Activated CD4-positive, alpha-beta memory T cell treated with anti-CD3 and anti-CD28 coated beads for 36 hours (primary cell): ENCODE measurements at regions of chr6 and their contacts with region 1.

Region 1: GRCh38 chr6:158649289-158650143 is at the start of gene SYTL3:
- DNase-seq: peak; percentile 93
- H3K4me3 Mint-ChIP-seq: peak within 1 kb of the TSS; percentile 79
- H3K27ac Mint-ChIP-seq: peak within 1 kb of the TSS; percentile 99
- H3K4me1 Mint-ChIP-seq: peaks cover 77% of the 10 kb centered on the region
- H3K27me3 Mint-ChIP-seq: no peaks in the 10 kb centered on the region
- total RNA-seq, gene SYTL3: 181 to 186 TPM

Region 2: DNA sequence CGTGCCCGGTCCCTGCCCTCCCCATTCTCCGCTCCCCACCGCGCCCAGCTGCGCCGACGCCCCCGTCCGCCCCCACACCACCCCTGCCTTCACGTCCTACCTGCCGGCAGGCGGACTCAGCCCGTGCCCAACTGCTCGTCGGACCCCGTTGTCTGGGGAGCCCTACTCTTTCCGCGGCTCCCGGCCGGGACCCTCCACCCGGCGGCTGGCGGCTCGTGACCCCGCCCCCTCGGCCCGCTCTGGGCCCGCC is 481.6 kb before region 1 on chr6 and contains the start of gene SERAC1:
- CTCF ChIA-PET with region 1: no interaction called
- POLR2A ChIA-PET with region 1: no interaction called
- intact Hi-C with region 1: loop called (anchors 2 kb)
- DNase-seq: no peak
- H3K4me3 Mint-ChIP-seq: peak within 1 kb of the TSS; percentile 91
- H3K27ac Mint-ChIP-seq: peak within 1 kb of the TSS; percentile 95
- H3K4me1 Mint-ChIP-seq: peaks cover 33% of the 10 kb centered on the region
- H3K27me3 Mint-ChIP-seq: no peaks in the 10 kb centered on the region
- total RNA-seq, gene SERAC1: 7.8 to 8.9 TPM

Region 3: GRCh38 chr6:158559895-158560835 is 89.4 kb before region 1 on chr6 and contains the start of gene TMEM181:
- CTCF ChIA-PET with region 1: no interaction called
- POLR2A ChIA-PET with region 1: interaction called, 5 read pairs
- intact Hi-C with region 1: loop called (anchors 2 kb)
- DNase-seq: peak; percentile 92
- H3K4me3 Mint-ChIP-seq: peak within 1 kb of the TSS; percentile 96
- H3K27ac Mint-ChIP-seq: peak within 1 kb of the TSS; percentile 91
- H3K4me1 Mint-ChIP-seq: peaks cover 43% of the 10 kb centered on the region
- H3K27me3 Mint-ChIP-seq: no peaks in the 10 kb centered on the region
- total RNA-seq, gene TMEM181: 11.3 to 11.6 TPM

Region 4: DNA sequence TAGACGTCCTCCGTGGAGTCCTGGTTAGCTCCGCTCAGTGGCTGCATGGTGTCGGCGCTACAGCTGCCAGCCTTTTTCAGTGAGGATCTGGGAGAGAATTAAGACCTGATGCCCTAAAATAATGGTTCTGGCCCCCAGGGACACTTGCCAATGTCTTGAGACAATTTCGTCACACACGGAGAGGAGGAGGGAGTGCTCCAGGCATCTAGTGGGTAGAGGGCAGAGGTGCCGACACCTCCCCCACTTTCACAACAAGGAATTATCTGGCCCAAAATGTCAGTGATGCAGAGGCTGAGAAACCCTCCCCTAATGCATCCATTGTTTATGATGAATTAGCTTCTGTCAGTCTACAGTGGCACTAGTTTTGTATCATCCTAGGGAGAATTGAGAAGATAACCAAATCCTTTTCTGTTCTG is 65.3 kb before region 1 on chr6:
- CTCF ChIA-PET with region 1: no interaction called
- POLR2A ChIA-PET with region 1: no interaction called
- intact Hi-C with region 1: no loop called
- DNase-seq: no peak
- H3K4me3 Mint-ChIP-seq: no peak overlapping the region
- H3K27ac Mint-ChIP-seq: peak overlapping the region; percentile 16
- H3K4me1 Mint-ChIP-seq: peaks cover 2% of the 10 kb centered on the region
- H3K27me3 Mint-ChIP-seq: no peaks in the 10 kb centered on the region

Region 5: GRCh38 chr6:158631678-158632537 is 17.6 kb before region 1 on chr6:
- CTCF ChIA-PET with region 1: interaction called, 11 read pairs
- POLR2A ChIA-PET with region 1: interaction called, 13 read pairs
- intact Hi-C with region 1: loop called (anchors 2 kb)
- DNase-seq: no peak
- H3K4me3 Mint-ChIP-seq: no peak overlapping the region
- H3K27ac Mint-ChIP-seq: peak overlapping the region; percentile 81
- H3K4me1 Mint-ChIP-seq: peaks cover 56% of the 10 kb centered on the region
- H3K27me3 Mint-ChIP-seq: no peaks in the 10 kb centered on the region

Region 6: DNA sequence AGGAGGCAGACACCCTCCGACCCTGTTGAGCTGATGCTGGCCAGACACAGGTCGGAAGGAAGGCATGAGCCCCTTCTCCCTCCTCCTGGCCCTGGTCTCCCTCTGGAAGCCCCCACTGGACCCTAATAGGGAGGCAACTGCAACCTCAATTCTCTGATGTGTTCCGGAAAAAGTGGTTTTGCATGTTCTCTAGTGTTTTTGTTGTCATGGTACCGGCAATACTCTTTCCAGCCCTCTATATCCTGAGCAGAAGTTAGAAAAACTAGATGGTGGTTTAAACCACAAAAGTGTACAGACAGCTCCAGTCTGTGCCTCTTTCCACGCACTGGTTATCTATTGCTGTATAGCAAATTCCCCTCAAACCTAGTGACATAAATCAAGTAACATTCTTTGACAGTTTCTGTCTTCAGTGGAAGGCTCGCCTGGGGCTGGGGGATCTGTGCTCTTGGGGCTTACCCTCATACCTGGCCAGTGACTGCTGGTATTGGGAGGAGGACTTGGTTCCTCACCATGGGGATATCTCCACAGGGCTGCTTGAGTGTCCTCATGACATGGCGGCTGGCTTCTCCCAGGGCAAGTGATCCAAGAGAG is 37.4 kb after region 1 on chr6:
- CTCF ChIA-PET with region 1: interaction called, 12 read pairs
- POLR2A ChIA-PET with region 1: interaction called, 9 read pairs
- intact Hi-C with region 1: loop called (anchors 2 kb)
- DNase-seq: peak; percentile 38
- H3K4me3 Mint-ChIP-seq: no peak overlapping the region
- H3K27ac Mint-ChIP-seq: peak overlapping the region; percentile 47
- H3K4me1 Mint-ChIP-seq: peaks cover 64% of the 10 kb centered on the region
- H3K27me3 Mint-ChIP-seq: no peaks in the 10 kb centered on the region

Region 7: GRCh38 chr6:158853072-158853871 is 203.8 kb after region 1 on chr6:
- CTCF ChIA-PET with region 1: no interaction called
- POLR2A ChIA-PET with region 1: no interaction called
- intact Hi-C with region 1: loop called (anchors 1 kb)
- DNase-seq: peak; percentile 94
- H3K4me3 Mint-ChIP-seq: no peak overlapping the region
- H3K27ac Mint-ChIP-seq: no peak overlapping the region
- H3K4me1 Mint-ChIP-seq: peaks cover 28% of the 10 kb centered on the region
- H3K27me3 Mint-ChIP-seq: no peaks in the 10 kb centered on the region

Region 8: DNA sequence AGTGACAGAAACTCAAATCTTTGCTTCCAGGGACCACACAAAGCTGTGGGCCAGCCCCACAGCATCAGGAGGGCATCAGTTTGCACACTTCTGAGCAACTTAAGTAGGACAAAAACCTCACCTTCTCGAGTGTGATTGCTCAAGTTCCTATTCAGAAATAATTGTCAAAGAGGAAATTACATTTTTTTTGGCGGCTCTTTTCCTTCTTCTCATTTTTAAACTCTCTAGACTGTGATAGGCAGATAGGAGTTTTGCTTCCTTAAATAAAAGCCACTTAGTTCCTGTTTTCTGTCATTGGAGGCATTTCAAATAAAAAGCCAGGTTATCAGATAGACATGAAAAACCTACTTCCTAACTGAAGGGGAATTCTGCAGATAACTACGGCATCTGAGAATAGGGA is 406.5 kb after region 1 on chr6:
- CTCF ChIA-PET with region 1: no interaction called
- POLR2A ChIA-PET with region 1: no interaction called
- intact Hi-C with region 1: loop called (anchors 1 kb)
- DNase-seq: no peak
- H3K4me3 Mint-ChIP-seq: no peak overlapping the region
- H3K27ac Mint-ChIP-seq: peak overlapping the region; percentile 53
- H3K4me1 Mint-ChIP-seq: peaks cover 73% of the 10 kb centered on the region
- H3K27me3 Mint-ChIP-seq: no peaks in the 10 kb centered on the region

Region 9: DNA sequence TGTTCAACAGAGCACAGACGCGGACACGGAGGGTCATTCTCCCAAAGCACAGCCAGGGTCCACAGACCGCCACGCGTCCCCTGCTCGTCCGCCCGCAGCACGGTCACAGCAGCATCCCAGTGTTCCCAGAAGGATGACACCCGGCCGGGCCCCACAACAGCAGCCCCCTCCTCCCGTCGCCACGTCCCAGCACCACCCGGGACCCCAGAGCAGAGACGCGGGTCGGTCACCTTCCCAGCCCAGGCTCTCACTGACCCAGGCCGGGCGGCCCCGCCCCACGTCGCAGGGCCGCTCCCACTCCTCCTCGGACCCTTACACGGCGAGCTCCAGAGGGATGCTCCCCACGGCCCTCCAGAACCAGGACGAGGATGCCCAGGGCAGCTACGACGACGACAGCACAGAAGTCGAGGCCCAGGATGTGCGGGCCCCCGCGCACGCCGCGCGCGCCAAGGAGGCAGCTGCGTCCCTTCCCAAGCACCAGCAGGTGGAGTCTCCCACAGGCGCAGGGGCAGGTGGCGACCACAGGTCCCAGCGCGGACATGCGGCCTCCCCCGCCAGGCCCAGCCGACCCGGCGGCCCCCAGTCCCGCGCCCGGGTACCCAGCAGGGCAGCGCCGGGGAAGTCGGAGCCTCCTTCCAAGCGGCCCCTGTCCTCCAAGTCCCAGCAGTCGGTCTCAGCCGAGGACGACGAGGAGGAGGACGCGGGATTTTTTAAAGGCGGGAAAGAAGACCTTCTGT is 584.0 kb after region 1 on chr6:
- CTCF ChIA-PET with region 1: no interaction called
- POLR2A ChIA-PET with region 1: no interaction called
- intact Hi-C with region 1: no loop called
- DNase-seq: no peak
- H3K4me3 Mint-ChIP-seq: no peak overlapping the region
- H3K27ac Mint-ChIP-seq: no peak overlapping the region
- H3K4me1 Mint-ChIP-seq: peaks cover 2% of the 10 kb centered on the region
- H3K27me3 Mint-ChIP-seq: peaks cover 36% of the 10 kb centered on the region

Region 10: DNA sequence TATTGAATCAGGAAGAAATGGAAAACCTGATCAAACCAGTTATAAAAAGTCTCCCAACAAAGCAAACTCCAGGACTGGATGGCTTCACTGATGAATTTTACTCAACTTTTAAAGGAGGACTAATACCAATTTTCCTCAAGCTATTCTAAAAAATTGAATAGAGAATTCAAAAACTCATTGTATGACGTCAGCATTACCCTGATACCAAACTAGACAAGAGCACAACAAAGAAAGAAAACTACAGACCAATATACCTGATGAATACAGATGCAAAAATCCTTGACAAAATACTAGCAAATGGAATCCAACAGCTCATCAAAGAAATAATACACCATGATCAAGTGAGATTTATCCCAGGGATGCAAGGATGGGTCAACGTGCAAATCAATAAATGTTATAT is 692.6 kb after region 1 on chr6:
- CTCF ChIA-PET with region 1: no interaction called
- POLR2A ChIA-PET with region 1: no interaction called
- intact Hi-C with region 1: no loop called
- DNase-seq: no peak
- H3K4me3 Mint-ChIP-seq: no peak overlapping the region
- H3K27ac Mint-ChIP-seq: no peak overlapping the region
- H3K4me1 Mint-ChIP-seq: no peaks in the 10 kb centered on the region
- H3K27me3 Mint-ChIP-seq: peaks cover 7% of the 10 kb centered on the region